Activated CD8-positive, alpha-beta memory T cell treated with anti-CD3 and anti-CD28 coated beads, Interleukin-2, amount 10 ng/mL, durations not matched to agents 7 days and 5 days (primary cell): ENCODE measurements at regions of chr16 and their contacts with region 1.

Region 1: DNA sequence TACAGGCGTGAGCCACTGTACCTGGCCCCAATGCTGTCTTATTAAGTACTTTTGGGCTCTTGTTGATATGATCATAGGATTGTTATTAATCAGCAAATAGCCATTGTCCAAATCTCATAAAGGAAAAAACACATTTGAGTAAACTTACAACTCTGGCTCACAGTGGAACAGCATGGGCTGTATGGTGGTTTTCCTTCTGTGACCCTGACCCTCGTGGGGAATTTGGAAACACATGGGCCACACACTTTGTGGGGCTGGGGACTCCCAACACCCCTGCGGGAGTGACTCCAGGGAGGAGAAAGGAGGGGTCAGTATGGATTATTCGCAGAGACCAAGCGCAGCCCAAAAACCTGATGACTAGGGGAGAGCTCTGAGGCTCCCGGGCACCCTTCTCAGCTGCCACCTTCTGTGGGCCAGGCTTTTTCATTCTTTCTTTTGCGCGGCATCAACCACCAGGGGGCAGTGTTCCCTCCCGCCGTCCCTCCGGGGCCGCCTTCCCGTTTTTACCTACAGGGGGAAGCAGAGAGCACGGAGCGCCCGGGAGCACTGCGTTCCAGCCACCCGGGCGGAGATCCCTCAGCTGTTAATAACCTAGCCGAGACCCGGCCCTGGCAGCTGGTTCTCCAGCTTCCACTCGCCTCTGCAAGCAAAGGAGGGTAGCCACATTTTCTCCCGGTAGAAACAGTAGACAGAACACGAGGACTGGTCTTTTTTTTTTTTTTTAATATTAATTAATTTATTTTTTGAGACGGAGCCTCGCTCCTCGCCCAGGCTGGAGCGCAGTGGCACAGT is 9.7 kb downstream of the TSNAXIP1 start:
- DNase-seq: peak; percentile 91
- ATAC-seq: peak; percentile 98
- H3K4me3 Mint-ChIP-seq: no peak overlapping the region
- H3K27ac Mint-ChIP-seq: no peak overlapping the region
- H3K4me1 Mint-ChIP-seq: peaks cover 5% of the 10 kb centered on the region
- H3K27me3 Mint-ChIP-seq: peaks cover 5% of the 10 kb centered on the region

Region 2: DNA sequence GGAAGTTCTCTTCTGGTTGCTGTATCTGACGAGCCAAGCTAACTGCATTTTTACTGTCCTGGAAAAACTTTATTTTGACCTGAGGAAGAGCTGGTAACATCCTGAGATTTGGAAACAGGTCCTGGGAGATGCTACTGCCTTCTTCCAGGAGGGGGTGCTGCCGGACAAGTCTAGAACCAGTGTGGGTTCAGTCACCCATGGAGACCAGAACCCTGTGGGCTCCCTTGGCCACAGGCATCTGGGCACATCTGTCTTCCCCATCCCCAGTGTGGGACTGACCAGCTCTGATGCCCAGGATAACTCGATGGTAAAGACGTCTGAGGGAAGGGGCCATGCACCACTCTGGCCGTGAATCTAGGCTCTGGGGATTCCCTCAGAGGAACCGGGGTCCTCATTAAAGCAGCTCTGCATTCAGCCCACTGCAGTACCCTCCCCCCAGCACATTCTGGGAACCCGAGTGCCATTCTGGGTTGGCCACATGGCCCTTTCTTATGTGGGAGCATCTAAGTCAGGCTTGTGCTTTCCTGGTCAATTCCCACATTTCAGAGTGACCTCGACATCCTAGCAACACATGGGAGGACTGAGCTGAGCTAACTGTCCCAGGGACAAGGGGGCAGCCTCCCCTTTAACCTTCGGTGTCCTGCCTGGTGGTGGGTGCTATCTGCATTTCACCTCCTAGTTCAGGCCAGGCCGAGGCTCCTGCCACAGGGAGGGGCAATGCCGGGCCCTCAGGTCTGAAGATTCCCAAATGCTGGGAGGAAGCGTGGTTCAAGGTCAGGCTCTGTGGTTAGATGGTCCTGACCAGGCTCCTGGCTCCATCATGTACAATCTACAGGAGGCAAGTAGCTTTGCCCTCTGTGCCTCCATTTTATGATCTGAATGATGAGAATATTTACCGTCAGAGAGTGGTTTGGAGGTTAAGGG is 143.4 kb before region 1 on chr16:
- CTCF ChIA-PET with region 1: interaction called, 16 read pairs
- DNase-seq: peak; percentile 70
- ATAC-seq: peak; percentile 37
- H3K4me3 Mint-ChIP-seq: no peak overlapping the region
- H3K27ac Mint-ChIP-seq: no peak overlapping the region
- H3K4me1 Mint-ChIP-seq: peaks cover under 1% of the 10 kb centered on the region
- H3K27me3 Mint-ChIP-seq: no peaks in the 10 kb centered on the region

Region 3: GRCh38 chr16:67781565-67781921 is 34.9 kb before region 1 on chr16:
- CTCF ChIA-PET with region 1: interaction called, 21 read pairs
- DNase-seq: peak; percentile 47
- ATAC-seq: peak; percentile 76
- H3K4me3 Mint-ChIP-seq: no peak overlapping the region
- H3K27ac Mint-ChIP-seq: peak overlapping the region; percentile 72
- H3K4me1 Mint-ChIP-seq: peaks cover 24% of the 10 kb centered on the region
- H3K27me3 Mint-ChIP-seq: no peaks in the 10 kb centered on the region

Region 4: GRCh38 chr16:67846320-67847063 is 30.1 kb after region 1 on chr16 and contains the start of gene NUTF2:
- CTCF ChIA-PET with region 1: interaction called, 38 read pairs
- DNase-seq: peak; percentile 98
- ATAC-seq: peak; percentile 69
- H3K4me3 Mint-ChIP-seq: peak within 1 kb of the TSS; percentile 79
- H3K27ac Mint-ChIP-seq: peak within 1 kb of the TSS; percentile 91
- H3K4me1 Mint-ChIP-seq: peaks cover 52% of the 10 kb centered on the region
- H3K27me3 Mint-ChIP-seq: no peaks in the 10 kb centered on the region
- total RNA-seq, gene NUTF2: 114 to 137 TPM

Region 5: DNA sequence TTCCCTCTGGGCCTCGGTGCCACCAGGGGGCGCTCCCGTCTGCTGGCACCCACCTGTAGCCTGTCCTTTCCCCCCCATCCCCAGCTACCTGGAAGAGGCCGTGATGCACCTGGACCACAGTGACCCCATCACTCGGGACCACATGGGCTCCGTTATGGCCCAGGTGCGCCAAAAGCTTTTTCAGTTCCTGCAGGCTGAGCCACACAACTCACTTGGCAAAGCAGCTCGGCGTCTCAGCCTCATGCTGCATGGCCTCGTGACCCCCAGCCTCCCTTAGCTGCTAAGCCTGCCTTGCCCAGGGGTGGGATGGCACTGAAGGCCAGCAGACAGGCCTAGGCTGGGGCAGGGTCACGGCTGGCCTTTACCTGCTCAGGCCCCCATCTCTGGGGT is 67.4 kb after region 1 on chr16:
- CTCF ChIA-PET with region 1: interaction called, 28 read pairs
- DNase-seq: peak; percentile 73
- ATAC-seq: peak; percentile 84
- H3K4me3 Mint-ChIP-seq: no peak overlapping the region
- H3K27ac Mint-ChIP-seq: peak overlapping the region; percentile 46
- H3K4me1 Mint-ChIP-seq: no peaks in the 10 kb centered on the region
- H3K27me3 Mint-ChIP-seq: no peaks in the 10 kb centered on the region

Region 6: GRCh38 chr16:67928561-67929364 is 112.3 kb after region 1 on chr16:
- CTCF ChIA-PET with region 1: interaction called, 53 read pairs
- DNase-seq: peak; percentile 86
- ATAC-seq: peak; percentile 92
- H3K4me3 Mint-ChIP-seq: no peak overlapping the region
- H3K27ac Mint-ChIP-seq: peak overlapping the region; percentile 6
- H3K4me1 Mint-ChIP-seq: no peaks in the 10 kb centered on the region
- H3K27me3 Mint-ChIP-seq: no peaks in the 10 kb centered on the region

Region 7: GRCh38 chr16:67959520-67959919 is 143.1 kb after region 1 on chr16:
- CTCF ChIA-PET with region 1: no interaction called
- DNase-seq: no peak
- ATAC-seq: no peak
- H3K4me3 Mint-ChIP-seq: no peak overlapping the region
- H3K27ac Mint-ChIP-seq: no peak overlapping the region
- H3K4me1 Mint-ChIP-seq: no peaks in the 10 kb centered on the region
- H3K27me3 Mint-ChIP-seq: no peaks in the 10 kb centered on the region

Region 8: GRCh38 chr16:68113059-68113761 is 296.8 kb after region 1 on chr16:
- CTCF ChIA-PET with region 1: no interaction called
- DNase-seq: no peak
- ATAC-seq: no peak
- H3K4me3 Mint-ChIP-seq: no peak overlapping the region
- H3K27ac Mint-ChIP-seq: no peak overlapping the region
- H3K4me1 Mint-ChIP-seq: peaks cover 70% of the 10 kb centered on the region
- H3K27me3 Mint-ChIP-seq: no peaks in the 10 kb centered on the region